ENCODE measurements at regions of chr17 and their contacts with region 1.

Region 1: DNA sequence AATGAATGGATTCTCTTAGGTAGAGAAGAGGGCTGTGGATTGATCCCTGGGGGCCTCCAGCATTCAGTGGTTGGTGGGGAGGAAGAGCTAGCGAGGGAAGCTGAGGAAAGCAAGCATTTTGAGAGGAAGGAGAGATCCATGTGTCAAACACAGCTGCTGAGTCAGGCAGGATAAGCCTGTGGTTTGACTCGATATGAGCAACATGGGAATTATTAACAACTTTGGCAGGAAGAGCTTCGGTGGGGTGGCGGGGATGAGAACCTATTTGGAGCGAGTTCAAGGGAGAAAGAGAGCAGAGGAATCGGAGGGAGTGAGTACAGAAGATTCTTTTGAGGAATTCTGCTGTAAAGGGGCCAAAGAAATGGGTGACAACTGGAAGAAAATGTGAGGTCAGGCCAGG is 59.5 kb upstream of the CDC42EP4 start:
- DNase-seq: peak; percentile 78
- H3K4me3 ChIP-seq: no peak overlapping the region
- CTCF ChIP-seq: no peak

Region 2: GRCh38 chr17:72725433-72726068 is 645.7 kb before region 1 on chr17:
- CTCF ChIA-PET with region 1: interaction called, 61 read pairs
- POLR2A ChIA-PET with region 1: no interaction called
- DNase-seq: no peak
- H3K4me3 ChIP-seq: no peak overlapping the region
- CTCF ChIP-seq: peak; percentile 90

Region 3: DNA sequence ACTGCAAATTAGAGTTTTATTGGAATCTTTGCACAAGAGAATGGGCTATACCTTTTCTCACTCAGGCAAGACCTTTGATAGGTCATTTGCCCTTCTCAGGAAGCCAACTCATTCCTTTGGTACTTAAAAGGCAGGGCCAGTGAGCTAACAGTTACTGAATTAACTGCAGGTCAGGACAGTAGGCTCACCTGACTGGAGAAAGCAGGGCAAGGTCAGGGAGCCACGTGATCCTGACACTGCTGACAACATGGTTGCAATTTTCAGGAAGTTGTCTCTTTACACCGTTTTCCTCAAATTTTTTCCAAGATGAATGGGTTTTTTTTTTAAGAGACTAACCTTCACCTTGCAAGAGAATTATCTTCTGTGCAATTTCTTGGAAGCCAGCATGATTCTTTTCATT is 130.7 kb before region 1 on chr17:
- CTCF ChIA-PET with region 1: interaction called, 848 read pairs
- POLR2A ChIA-PET with region 1: no interaction called
- DNase-seq: no peak
- H3K4me3 ChIP-seq: no peak overlapping the region
- CTCF ChIP-seq: no peak

Region 4: DNA sequence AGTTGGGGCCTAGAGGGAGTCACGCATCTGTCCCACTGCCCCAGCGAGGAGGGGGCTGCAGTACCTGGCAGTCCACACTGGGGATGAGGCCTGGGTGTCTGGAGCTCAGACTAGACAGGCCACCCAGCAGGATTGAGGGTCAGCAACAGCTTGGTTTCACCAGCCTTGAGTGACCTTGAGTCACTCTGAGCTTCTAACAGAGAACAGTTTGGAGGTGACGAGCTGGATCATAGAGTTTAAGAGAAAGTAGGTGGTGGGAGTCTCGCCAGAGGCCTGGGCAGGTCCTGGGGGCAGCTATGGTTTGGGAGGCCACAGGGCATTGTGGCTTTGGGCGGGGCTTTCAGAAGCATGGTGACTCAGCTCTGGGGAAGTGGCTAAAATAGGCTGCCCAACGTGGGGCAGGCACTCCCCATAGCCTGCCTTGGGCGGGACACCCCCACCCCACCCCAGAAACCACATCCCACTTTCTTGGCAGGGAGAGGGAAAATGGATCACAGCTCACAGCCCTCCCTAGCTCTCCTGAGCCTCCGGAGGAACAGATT is 80.0 kb before region 1 on chr17:
- CTCF ChIA-PET with region 1: interaction called, 12 read pairs
- POLR2A ChIA-PET with region 1: no interaction called
- DNase-seq: no peak
- H3K4me3 ChIP-seq: no peak overlapping the region
- CTCF ChIP-seq: no peak

Region 5: DNA sequence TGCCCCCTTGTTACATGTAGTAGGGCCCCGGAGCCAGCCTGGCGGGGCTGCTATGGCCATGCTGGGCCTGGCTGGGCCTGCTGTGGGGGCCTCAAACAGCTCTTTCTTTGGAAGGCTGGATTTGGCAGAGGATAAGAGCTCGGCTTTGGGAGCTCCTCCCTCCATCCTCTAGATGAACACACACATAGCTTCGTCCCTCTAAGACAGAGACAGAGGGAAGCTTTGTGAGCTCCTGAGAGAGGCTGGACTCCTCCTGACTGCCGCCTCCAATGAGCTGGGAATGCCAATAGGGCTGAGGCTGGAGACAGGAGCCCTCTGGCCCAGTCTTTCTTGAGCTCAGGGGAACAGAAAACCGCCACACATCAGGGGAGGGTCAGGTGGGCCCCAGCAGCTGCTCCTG is 22.1 kb before region 1 on chr17:
- CTCF ChIA-PET with region 1: interaction called, 13 read pairs
- POLR2A ChIA-PET with region 1: no interaction called
- DNase-seq: no peak
- H3K4me3 ChIP-seq: no peak overlapping the region
- CTCF ChIP-seq: no peak

Region 6: DNA sequence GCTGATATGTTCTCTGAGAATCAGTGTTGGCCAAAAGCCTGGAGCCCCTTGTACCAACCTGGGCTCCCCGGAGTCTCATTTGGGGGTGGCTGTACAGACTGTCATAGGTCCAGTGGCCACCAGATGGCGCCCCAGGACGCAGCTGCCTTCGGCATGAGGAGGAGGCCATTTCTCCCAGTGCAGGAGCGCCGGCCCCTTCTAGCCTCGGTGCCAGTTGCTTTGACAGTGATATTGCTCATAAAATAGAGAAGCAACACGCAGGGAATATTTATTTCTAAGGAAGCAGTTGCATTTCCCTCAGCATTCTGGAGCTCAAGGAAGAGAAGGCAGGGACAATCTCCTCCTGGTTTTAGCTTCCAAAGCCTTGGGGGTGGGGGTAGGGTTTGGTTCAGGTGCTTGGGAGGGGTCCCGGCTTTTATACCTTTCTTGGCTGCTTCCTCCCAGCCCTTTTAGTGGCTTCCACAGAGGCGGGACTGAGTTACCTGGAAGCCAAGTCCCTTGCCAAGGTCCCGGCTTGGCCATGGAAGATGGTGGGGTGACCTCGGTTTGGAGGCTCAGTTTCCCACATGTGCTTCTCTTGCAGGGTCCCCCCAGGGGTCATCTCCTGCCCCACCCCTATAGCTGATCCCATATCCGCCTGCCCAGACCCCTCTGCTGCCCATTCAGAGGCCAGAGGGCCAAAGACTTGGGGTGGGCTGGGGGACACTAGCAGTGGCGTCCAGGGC is 58.3 kb after region 1 on chr17:
- CTCF ChIA-PET with region 1: interaction called, 11 read pairs
- POLR2A ChIA-PET with region 1: no interaction called
- DNase-seq: no peak
- H3K4me3 ChIP-seq: no peak overlapping the region
- CTCF ChIP-seq: peak; percentile 98

Measured in AG04449 (cell line).